GM10248 (cell line): ENCODE measurements at regions of chr15 and their contacts with region 1.

Region 1: GRCh38 chr15:84588053-84588874 is 12.5 kb upstream of the ZSCAN2 start:
- DNase-seq: peak; percentile 90
- CTCF ChIP-seq: peak; percentile 68

Region 2: DNA sequence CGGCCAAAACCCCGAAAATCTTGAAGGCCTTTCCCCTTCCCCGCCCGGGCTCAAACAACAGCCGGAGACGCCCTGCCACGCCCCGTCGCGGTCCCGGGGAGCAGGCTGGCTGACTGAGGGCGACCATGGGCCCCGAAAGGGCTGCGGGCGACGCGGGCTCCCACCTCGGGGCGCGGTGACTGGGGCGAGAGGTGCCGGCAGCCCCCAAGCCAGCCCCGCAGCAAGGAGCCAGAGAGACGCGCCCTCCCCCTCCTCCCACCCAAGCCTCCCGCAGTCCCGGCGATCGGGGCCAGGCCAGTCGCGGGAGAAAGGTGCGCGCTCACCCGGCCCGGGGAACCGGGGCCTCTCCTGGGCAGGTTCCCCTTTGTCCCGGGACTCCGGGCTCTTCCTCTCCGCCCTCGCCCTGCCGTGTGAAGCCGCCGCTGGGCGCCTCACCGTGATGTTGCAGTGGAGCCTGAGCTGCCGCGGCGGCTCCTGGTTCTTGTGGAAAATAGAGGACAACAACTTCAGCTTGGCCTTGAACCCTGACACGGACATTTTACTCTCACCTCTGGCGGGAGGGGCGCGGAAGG is 18.0 kb before region 1 on chr15:
- CTCF ChIA-PET with region 1: interaction called, 63 read pairs
- POLR2A ChIA-PET with region 1: no interaction called
- DNase-seq: peak; percentile 46
- CTCF ChIP-seq: no peak

Region 3: DNA sequence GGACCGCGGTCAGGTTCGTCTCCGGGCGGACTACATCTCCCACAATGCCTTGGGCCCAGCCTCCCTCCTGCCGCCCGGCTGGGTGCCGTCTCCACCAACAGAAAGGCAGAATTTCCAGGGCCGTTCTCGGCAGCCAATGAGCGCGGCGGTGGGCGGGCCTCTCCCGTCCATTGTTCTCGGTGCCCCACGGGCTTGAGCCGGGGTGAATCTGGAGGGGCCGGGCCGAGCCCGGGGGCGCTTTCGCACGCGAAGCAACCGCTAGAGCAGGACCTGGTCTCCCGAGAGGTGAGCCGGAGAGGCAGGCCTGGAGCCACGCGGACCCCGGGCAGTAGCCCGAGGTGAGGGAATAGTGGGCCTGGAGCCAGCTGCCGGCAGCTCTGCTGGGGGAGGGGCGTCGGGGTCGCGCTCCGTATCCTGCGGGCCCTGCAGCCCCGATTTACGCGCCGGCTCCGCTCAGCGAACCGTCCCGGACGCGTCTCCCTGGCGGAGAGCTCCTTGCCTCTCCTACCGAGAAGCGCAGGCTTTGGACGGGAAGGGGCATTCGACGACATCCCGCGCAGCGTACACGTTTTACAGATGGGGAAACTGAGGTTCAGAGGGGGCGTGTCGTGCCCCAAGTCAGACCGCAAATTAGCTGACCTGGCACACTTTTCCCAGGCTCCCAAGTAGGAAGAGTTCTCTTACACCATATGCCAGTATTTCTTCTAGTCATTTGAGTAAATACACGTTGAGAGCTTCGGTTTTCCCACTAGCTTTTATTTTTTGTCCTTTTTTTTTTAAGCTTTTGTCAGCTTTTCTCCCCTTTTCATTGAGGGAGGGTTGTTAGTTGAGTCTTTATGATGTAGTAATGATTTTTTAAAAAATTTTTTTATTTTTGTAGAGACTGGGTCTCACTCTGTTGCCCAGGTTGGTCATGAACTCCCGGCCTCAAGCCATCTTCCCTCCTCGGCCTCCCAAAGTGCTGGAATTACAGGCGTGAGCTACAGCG is 12.9 kb after region 1 on chr15 and contains the start of gene ZSCAN2:
- CTCF ChIA-PET with region 1: interaction called, 28 read pairs
- POLR2A ChIA-PET with region 1: no interaction called
- DNase-seq: peak; percentile 96
- CTCF ChIP-seq: no peak

Region 4: GRCh38 chr15:84883433-84883832 is 295.2 kb after region 1 on chr15:
- CTCF ChIA-PET with region 1: interaction called, 10 read pairs
- POLR2A ChIA-PET with region 1: no interaction called
- DNase-seq: no peak
- CTCF ChIP-seq: no peak

Region 5: GRCh38 chr15:84924074-84924731 is 335.9 kb after region 1 on chr15:
- CTCF ChIA-PET with region 1: interaction called, 50 read pairs
- POLR2A ChIA-PET with region 1: no interaction called
- DNase-seq: no peak
- CTCF ChIP-seq: no peak